GM18951 (cell line): ENCODE measurements at regions of chr1 and their contacts with region 1.

Region 1: DNA sequence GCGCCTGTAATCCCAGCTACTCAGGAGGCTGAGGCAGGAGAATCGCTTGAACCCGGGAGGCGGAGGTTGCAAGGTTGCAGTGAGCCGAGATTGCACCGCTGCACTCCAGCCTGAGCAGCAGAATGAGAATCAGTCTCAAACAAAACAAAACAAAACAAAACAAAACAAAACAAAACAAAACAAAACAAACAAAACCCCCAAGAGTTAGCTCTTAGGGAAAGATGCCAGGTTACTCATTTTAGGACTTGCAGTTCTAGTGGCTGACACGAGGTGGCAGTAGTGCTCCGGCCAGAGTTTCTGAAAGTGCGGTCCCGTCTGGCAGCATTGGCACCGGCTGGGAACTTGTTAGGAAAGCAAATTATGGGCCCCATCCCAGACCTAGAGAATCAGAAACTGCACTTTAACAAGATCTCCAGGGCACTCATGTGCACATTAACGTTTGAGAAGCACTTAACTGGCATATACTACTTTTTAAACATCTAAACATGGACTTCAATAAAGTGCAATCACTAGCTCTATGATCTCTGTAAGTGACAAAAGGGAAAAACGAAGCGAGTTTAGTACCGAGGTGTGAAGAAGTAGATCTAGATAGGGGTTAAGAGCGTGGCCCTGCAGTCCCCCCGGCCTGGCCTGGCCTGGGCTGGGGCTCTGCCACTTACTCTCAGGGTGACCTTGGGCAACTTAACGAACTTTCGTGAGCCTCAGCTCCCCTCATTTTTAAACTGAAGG is 41.9 kb upstream of the TNFRSF1B start:
- POLR2A ChIP-seq: peak; percentile 3

Region 2: GRCh38 chr1:12067900-12068821 is 56.7 kb before region 1 on chr1:
- in situ Hi-C with region 1: no loop called
- POLR2A ChIP-seq: no peak

Region 3: GRCh38 chr1:12208764-12209494 is 84.1 kb after region 1 on chr1:
- in situ Hi-C with region 1: loop called (anchors 5 kb)
- POLR2A ChIP-seq: peak; percentile 14

Region 4: DNA sequence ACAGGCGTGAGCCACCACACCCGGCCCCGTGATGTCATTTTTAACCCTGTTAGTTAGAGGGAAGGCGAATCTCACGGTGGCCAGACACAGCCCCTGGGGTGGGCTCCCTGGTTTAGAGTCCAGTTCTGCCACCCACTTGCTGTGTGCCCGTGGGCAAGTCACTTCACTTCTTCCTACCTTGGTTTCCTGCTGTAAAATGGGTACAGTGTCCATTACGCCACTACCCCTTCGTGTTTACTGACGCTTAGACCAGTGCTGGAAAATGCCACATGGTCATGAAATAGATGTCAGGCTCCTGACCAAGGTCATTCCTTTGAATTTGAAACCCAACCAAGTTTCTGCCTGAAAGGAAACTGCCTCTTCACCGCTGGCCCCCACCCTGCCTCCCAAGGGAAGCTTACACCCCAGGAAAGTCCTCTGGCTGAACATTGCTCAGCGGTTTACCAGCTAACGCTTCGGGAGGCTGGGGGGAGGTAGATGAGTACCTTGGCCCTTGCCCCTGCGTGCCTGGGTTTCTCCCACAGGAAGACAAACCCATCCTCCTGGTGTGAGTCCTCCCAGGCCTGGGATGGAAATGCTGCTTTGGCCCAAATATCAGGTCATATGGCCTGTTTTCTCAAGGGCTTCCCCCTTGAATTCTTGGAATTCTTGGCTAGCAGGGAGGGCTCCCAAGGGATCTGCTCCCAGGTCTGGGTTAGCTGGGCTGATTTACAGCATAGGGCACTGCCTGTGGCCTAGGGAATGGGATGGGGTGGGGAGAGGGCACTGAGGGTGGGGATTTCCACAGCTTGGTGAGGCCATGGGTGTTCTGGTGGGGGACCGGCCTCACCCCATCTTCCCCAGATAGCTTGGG is 511.5 kb after region 1 on chr1:
- in situ Hi-C with region 1: loop called (anchors 25 kb)
- POLR2A ChIP-seq: no peak